ENCODE measurements at regions of chr3 and their contacts with region 1.

Region 1: GRCh38 chr3:41198950-41199865 is at the start of gene CTNNB1:
- DNase-seq: peak; percentile 88 to 94 (median 92)
- ATAC-seq: peak; percentile 93
- H3K4me3 ChIP-seq: peak within 1 kb of the TSS; percentile 79
- H3K4me3 Mint-ChIP-seq: peak within 1 kb of the TSS; percentile 90 to 100 (median 95)
- H3K27ac ChIP-seq: peak within 1 kb of the TSS; percentile 97
- H3K27ac Mint-ChIP-seq: peak within 1 kb of the TSS; percentile 92 to 98 (median 96)
- H3K4me1 ChIP-seq: peaks cover 26 to 39% of the 10 kb centered on the region in 2 donors
- H3K4me1 Mint-ChIP-seq: peaks cover 31 to 43% (median 38%) of the 10 kb centered on the region in 7 donors
- H3K27me3 ChIP-seq: peaks cover 0 to 3% of the 10 kb centered on the region in 2 donors
- H3K27me3 Mint-ChIP-seq: peaks cover 0 to 29% (median 0%) of the 10 kb centered on the region in 5 donors
- total RNA-seq, gene CTNNB1: 118 to 227 (median 177) TPM

Region 2: GRCh38 chr3:40524568-40525285 is 674.5 kb before region 1 on chr3 and contains the start of gene ZNF621:
- CTCF ChIA-PET with region 1: no interaction called
- POLR2A ChIA-PET with region 1: no interaction called
- intact Hi-C with region 1: loop called in 1 of 2 experiments (anchors 1 kb)
- DNase-seq: peak; percentile 43 to 90 (median 73)
- ATAC-seq: peak; percentile 99
- H3K4me3 ChIP-seq: peak within 1 kb of the TSS; percentile 69
- H3K4me3 Mint-ChIP-seq: peak within 1 kb of the TSS; percentile 85 to 97 (median 96)
- H3K27ac ChIP-seq: peak within 1 kb of the TSS; percentile 81
- H3K27ac Mint-ChIP-seq: peak within 1 kb of the TSS; percentile 91 to 98 (median 97)
- H3K4me1 ChIP-seq: peaks cover 0 to 15% of the 10 kb centered on the region in 2 donors
- H3K4me1 Mint-ChIP-seq: peaks cover 17 to 39% (median 27%) of the 10 kb centered on the region in 7 donors
- H3K27me3 ChIP-seq: no peaks in the 10 kb centered on the region
- H3K27me3 Mint-ChIP-seq: no peaks in the 10 kb centered on the region
- total RNA-seq, gene ZNF621: 14.6 to 26.9 (median 21.9) TPM

Region 3: DNA sequence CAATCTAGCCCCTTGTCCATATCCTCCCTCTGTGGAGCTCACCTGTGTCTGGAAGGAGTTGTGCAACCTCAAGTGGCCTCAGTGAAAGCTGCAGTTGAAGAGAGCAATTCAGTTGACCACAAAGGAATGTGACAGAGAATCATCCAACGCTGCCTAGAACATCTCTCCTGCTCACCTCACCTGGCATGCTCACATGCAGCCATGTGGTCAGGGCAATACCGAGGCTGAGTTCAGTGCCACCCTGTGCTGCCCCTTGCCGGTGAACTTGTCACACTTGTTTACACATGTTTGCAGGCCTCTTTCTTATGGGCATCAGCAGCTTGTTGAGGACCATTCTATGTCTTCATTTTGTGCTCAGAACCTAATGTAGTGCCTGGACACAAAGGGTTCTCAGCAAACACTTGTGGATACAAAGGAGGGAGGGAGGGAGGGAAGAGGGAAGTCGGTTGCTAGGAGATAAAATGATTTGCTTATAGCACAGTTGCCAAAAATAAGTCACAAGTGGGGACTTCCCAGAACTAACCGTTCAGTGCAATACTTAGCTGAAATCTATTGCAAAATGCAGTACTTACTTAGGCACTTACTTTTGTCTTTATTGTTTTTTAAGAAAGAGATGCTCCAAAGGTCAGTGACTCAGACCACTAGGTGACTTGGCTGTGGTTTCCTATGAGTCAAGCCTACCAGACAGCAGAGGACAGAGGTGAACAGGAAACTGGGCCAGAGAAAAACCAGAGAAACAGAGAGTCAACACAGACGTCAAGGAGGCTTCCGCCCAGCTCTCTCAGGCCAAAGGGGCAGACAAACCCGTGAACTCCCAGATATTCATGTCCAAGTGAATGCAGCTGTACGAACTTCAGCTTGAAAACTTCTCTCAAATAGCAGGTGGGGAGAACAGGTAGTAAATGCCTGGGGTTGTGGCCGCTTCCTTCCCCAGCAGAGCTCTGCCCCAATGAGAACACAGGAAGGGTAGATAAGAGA is 227.7 kb before region 1 on chr3:
- CTCF ChIA-PET with region 1: no interaction called
- POLR2A ChIA-PET with region 1: no interaction called
- intact Hi-C with region 1: loop called in 1 of 2 experiments (anchors 5 kb)
- DNase-seq: peak in 1 of 9 donors; percentile 54
- ATAC-seq: peak; percentile 89
- H3K4me3 ChIP-seq: no peak overlapping the region
- H3K4me3 Mint-ChIP-seq: peak overlapping the region in 1 of 10 donors; percentile 74
- H3K27ac ChIP-seq: no peak overlapping the region
- H3K27ac Mint-ChIP-seq: peak overlapping the region in 1 of 9 donors; percentile 92
- H3K4me1 ChIP-seq: no peaks in the 10 kb centered on the region
- H3K4me1 Mint-ChIP-seq: peaks cover 0 to 40% (median 0%) of the 10 kb centered on the region in 7 donors
- H3K27me3 ChIP-seq: no peaks in the 10 kb centered on the region
- H3K27me3 Mint-ChIP-seq: peaks cover 2 to 34% (median 19%) of the 10 kb centered on the region in 5 donors

Region 4: GRCh38 chr3:41216993-41217392 is 17.8 kb after region 1 on chr3:
- CTCF ChIA-PET with region 1: no interaction called
- POLR2A ChIA-PET with region 1: interaction called, 8 read pairs
- intact Hi-C with region 1: loop called in 1 of 2 experiments (anchors 2 kb)
- DNase-seq: no peak
- ATAC-seq: no peak
- H3K4me3 ChIP-seq: no peak overlapping the region
- H3K4me3 Mint-ChIP-seq: peak overlapping the region in 8 of 10 donors; percentile 4 to 63 (median 44)
- H3K27ac ChIP-seq: no peak overlapping the region
- H3K27ac Mint-ChIP-seq: peak overlapping the region in 7 of 9 donors; percentile 6 to 60 (median 37)
- H3K4me1 ChIP-seq: peaks cover 40 to 70% of the 10 kb centered on the region in 2 donors
- H3K4me1 Mint-ChIP-seq: peaks cover 55 to 99% (median 92%) of the 10 kb centered on the region in 7 donors
- H3K27me3 ChIP-seq: no peaks in the 10 kb centered on the region
- H3K27me3 Mint-ChIP-seq: no peaks in the 10 kb centered on the region

Region 5: GRCh38 chr3:42012935-42013690 is 813.9 kb after region 1 on chr3:
- CTCF ChIA-PET with region 1: interaction called, 3 read pairs
- POLR2A ChIA-PET with region 1: no interaction called
- intact Hi-C with region 1: loop called in 1 of 2 experiments (anchors 5 kb)
- DNase-seq: peak; percentile 36 to 65 (median 58)
- ATAC-seq: peak; percentile 88
- H3K4me3 ChIP-seq: peak overlapping the region; percentile 78
- H3K4me3 Mint-ChIP-seq: peak overlapping the region; percentile 86 to 95 (median 90)
- H3K27ac ChIP-seq: peak overlapping the region; percentile 78
- H3K27ac Mint-ChIP-seq: peak overlapping the region; percentile 84 to 98 (median 93)
- H3K4me1 ChIP-seq: peaks cover 10 to 15% of the 10 kb centered on the region in 2 donors
- H3K4me1 Mint-ChIP-seq: peaks cover 19 to 39% (median 37%) of the 10 kb centered on the region in 7 donors
- H3K27me3 ChIP-seq: no peaks in the 10 kb centered on the region
- H3K27me3 Mint-ChIP-seq: no peaks in the 10 kb centered on the region

Measured in naive thymus-derived CD4-positive, alpha-beta T cell (primary cell).